Activated CD4-positive, alpha-beta memory T cell treated with anti-CD3 and anti-CD28 coated beads for 36 hours (primary cell): ENCODE measurements at regions of chr1 and their contacts with region 1.

Region 1: GRCh38 chr1:156445789-156446263 is 54.7 kb downstream of the MEF2D start:
- DNase-seq: peak; percentile 90
- H3K4me3 Mint-ChIP-seq: no peak overlapping the region
- H3K27ac Mint-ChIP-seq: no peak overlapping the region
- H3K4me1 Mint-ChIP-seq: peaks cover 16% of the 10 kb centered on the region
- H3K27me3 Mint-ChIP-seq: peaks cover 47% of the 10 kb centered on the region

Region 2: DNA sequence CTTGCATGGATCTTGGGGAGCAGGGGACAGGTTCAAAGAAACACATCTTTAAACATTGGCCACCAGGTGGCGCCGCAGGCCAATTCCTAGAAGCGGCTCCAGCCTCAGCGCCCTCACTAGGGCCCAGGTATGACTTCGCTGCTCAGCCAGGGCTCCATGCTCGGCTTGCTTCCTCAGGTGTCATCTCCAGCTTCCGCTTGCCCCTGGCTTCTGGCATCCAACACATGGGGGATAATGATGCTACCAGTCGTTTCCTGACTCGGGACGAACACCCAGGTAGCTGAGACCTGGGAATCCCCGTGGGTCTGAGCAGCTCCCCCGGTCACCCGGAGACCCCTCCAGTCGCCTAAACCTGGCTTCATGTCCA is 355.0 kb before region 1 on chr1:
- CTCF ChIA-PET with region 1: no interaction called
- POLR2A ChIA-PET with region 1: no interaction called
- intact Hi-C with region 1: loop called (anchors 2 kb)
- DNase-seq: peak; percentile 93
- H3K4me3 Mint-ChIP-seq: peak overlapping the region; percentile 10
- H3K27ac Mint-ChIP-seq: peak overlapping the region; percentile 42
- H3K4me1 Mint-ChIP-seq: peaks cover 13% of the 10 kb centered on the region
- H3K27me3 Mint-ChIP-seq: peaks cover 12% of the 10 kb centered on the region

Region 3: DNA sequence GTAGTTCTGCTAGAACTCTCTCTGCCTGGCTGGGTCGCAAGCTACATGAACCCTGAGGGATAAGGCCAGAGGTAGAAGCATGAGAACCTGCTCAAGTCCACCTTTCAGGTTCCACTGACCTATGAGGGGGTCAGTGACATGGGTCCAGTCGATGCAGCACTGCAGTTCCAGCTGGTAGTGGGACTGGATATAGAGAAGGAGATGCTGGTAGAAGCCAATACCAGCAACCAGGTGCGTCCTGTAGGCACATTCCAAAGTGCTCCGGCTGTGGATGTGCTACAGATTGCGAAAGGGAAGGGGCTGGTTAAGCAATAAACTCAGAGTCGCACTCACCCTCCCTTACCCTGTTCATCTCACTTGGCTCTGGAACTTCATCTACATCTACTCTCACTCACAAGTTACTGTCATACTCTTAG is 168.9 kb before region 1 on chr1:
- CTCF ChIA-PET with region 1: no interaction called
- POLR2A ChIA-PET with region 1: no interaction called
- intact Hi-C with region 1: no loop called
- DNase-seq: no peak
- H3K4me3 Mint-ChIP-seq: no peak overlapping the region
- H3K27ac Mint-ChIP-seq: no peak overlapping the region
- H3K4me1 Mint-ChIP-seq: peaks cover 20% of the 10 kb centered on the region
- H3K27me3 Mint-ChIP-seq: no peaks in the 10 kb centered on the region

Region 4: DNA sequence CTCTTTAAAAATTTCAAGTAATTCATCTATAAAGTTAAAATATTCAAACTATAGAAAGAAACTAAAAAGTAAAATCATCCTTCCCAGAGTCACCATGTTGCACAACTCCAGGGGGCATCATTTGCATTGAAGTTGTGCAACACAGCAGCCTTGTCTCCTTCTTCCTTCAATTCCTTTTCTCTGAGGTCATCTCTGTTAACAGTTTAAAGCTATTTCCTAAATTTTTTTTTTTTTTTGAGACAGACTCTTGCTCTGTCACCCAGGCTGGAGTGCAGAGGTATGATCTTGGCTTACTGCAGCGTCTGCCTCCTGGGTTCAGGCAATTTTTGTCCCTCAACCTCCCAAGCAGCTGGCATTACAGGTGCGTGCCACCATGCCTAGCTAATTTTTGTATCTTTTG is 69.7 kb before region 1 on chr1:
- CTCF ChIA-PET with region 1: interaction called, 491 read pairs
- POLR2A ChIA-PET with region 1: no interaction called
- intact Hi-C with region 1: no loop called
- DNase-seq: no peak
- H3K4me3 Mint-ChIP-seq: no peak overlapping the region
- H3K27ac Mint-ChIP-seq: no peak overlapping the region
- H3K4me1 Mint-ChIP-seq: no peaks in the 10 kb centered on the region
- H3K27me3 Mint-ChIP-seq: peaks cover 8% of the 10 kb centered on the region

Region 5: DNA sequence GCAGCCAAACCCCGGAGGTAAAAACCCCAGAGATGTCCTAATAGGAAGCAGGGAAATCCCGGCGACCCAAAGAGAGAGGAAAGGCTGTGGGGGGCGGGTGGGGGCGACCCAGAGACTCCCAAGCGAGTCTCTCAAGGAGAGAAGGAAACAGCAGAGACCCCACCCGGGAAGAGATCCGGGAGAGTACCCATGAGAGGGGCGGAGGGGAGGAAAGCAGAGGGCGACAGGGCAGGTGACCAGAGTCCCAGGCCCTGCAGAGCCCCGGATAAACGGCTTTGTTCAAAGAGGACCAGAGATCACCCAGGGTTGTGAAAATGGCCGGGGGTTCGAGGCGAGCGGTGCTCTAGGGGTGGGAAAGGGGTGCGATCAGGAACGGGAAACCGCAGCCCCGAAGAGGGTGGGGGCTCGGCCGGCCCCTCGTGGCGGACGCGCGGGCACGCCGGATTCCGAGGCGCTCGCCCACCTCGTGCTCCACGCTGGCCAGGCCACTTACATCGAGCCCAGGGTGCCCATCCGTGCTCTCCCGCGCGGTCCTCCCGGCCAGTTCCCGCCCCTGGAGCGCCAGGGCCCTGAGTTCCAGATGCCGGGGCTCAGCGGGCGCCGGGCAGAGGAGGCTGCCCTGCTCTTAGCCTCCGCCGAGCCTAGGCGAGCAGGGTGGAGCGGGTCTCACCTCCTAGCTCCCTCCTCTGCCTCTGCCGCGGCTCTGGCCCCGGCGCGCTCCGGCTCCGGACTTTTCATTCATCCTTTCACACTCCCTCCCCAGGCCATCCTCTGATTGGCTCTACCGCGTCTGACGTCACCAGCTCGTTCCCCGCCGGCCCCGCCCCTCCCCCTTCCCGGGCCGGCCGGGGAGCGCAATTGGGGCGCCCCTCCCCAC is 24.5 kb before region 1 on chr1:
- CTCF ChIA-PET with region 1: interaction called, 27 read pairs
- POLR2A ChIA-PET with region 1: interaction called, 3 read pairs
- intact Hi-C with region 1: no loop called
- DNase-seq: peak; percentile 86
- H3K4me3 Mint-ChIP-seq: peak overlapping the region; percentile 73
- H3K27ac Mint-ChIP-seq: no peak overlapping the region
- H3K4me1 Mint-ChIP-seq: peaks cover 21% of the 10 kb centered on the region
- H3K27me3 Mint-ChIP-seq: peaks cover 49% of the 10 kb centered on the region

Region 6: DNA sequence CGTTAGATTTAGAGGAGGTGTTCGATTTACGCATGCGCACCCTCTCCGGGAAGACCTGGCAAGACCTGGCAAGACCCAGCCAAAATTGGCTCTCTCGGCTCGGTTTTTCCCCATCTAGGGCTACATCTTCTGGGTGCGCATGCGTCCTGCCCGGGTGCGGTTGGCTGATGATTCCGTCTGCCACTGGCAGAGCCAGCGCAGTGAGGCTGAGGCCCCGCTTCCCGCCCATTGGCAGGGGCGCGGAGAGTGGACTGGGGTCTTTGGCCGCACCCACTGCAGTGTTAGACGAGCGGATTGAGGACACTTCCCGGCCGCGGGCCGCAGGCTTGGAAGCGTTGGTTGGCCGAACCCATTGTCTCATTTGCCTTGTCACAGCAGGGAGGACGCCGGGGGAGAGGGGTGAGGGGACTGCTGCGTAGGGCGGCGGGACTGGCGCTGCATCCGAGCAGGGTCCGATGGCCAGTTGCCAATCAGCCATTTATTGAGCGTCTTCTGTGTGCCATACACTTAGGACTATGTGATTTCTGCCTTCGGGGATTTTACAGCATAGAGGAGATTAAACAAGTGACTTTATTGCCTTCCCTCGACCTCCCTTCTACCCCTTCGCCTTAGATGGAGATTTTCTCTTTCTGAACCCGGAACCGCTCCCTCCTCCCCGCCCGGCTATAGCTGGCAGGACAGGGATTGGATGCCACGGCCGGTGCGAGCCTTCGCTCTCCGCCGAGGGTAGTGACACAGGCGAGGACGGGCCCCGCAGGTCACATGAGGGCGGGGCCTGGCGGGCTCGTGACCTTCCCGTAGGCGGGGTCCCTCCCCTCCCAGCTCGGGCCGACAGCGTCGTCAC is 11.0 kb after region 1 on chr1:
- CTCF ChIA-PET with region 1: interaction called, 27 read pairs
- POLR2A ChIA-PET with region 1: no interaction called
- intact Hi-C with region 1: loop called (anchors 1 kb)
- DNase-seq: peak; percentile 99
- H3K4me3 Mint-ChIP-seq: peak overlapping the region; percentile 86
- H3K27ac Mint-ChIP-seq: peak overlapping the region; percentile 99
- H3K4me1 Mint-ChIP-seq: peaks cover 29% of the 10 kb centered on the region
- H3K27me3 Mint-ChIP-seq: no peaks in the 10 kb centered on the region

Region 7: DNA sequence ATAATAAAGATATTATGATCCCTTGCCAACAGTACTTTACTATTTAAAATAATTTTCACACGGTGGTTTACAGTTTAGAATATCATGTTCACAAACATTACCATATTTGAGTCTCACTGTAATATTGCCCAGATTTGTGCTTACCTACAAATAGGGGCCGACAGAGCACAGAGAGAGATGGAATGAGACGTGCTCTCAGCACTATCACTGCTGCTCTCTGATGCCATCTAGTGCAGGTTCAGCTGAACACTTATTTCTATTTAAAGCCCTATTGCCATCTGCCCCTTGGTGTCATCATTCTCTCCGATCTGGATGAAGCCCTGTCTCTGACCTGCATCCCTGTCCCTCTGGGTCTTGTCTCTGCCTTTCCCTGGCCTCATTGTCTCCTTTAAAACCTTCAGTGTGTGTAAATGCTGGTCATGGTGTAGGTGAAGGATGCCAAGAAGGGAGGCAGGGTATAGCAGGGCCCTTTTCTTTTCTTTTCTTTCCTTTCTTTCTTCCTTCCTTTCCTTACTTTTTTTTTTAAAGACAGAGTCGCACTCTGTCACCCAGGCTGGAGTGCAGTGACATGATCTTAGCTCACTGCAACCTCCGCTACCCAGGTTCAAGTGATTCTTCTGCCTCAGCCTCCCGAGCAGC is 162.3 kb after region 1 on chr1:
- CTCF ChIA-PET with region 1: interaction called, 16 read pairs
- POLR2A ChIA-PET with region 1: no interaction called
- intact Hi-C with region 1: no loop called
- DNase-seq: peak; percentile 66
- H3K4me3 Mint-ChIP-seq: no peak overlapping the region
- H3K27ac Mint-ChIP-seq: no peak overlapping the region
- H3K4me1 Mint-ChIP-seq: peaks cover 3% of the 10 kb centered on the region
- H3K27me3 Mint-ChIP-seq: peaks cover 9% of the 10 kb centered on the region